ENCODE measurements at regions of chr17 and their contacts with region 1.

Region 1: GRCh38 chr17:47978324-47978723 is 7.4 kb downstream of the CDK5RAP3 start:
- DNase-seq: peak; percentile 67
- H3K4me3 Mint-ChIP-seq: no peak overlapping the region
- H3K27ac Mint-ChIP-seq: no peak overlapping the region
- H3K4me1 Mint-ChIP-seq: peaks cover 16% of the 10 kb centered on the region
- H3K27me3 Mint-ChIP-seq: no peaks in the 10 kb centered on the region

Region 2: DNA sequence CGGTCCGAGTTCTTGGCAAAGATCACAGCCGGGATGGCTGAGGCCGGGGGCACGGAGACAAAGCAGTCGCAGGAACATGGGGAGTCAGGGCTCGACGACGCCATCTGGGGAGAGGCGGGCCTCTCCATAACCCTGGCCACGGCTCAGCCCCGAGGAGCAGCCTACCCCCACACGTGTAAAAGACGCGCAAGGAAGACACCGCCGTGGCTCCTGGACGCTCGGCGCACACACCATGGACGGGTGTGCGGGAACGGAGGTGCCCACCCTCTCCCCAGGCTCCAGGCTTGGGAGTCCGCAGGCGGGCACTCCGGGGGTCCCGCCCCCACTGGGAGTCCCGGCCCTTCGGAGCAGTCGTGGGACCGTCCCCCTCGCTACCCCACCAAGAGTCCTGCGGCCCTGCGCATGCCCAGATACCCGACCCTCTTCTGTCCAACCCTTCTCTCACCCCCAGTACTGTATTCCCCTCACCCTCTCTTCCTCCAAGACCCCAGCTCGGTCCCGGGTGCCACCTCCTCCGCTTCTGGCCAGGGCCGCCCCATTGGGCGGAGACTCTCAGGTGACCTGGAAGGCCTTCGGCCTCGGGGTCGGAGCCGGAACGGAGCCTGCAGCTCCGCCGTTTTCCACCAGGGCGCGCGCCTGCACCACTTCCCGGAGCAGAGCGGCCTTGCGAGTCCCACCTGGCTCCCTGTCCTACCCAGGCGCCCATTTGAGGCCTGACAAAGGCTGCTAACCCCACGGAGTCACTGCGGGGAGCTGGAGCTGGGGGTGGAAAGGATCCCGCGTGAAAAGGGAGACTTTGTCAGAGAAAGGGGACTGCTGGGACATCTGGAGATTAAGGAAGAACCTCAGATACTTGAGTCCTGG is 137.4 kb before region 1 on chr17 and contains the start of gene SCRN2:
- CTCF ChIA-PET with region 1: no interaction called
- POLR2A ChIA-PET with region 1: no interaction called
- DNase-seq: peak; percentile 87
- H3K4me3 Mint-ChIP-seq: peak within 1 kb of the TSS; percentile 98
- H3K27ac Mint-ChIP-seq: peak within 1 kb of the TSS; percentile 91
- H3K4me1 Mint-ChIP-seq: peaks cover 37% of the 10 kb centered on the region
- H3K27me3 Mint-ChIP-seq: peaks cover 17% of the 10 kb centered on the region
- total RNA-seq, gene SCRN2: 26.8 to 33.2 TPM

Region 3: GRCh38 chr17:48011405-48012150 is 33.3 kb after region 1 on chr17:
- CTCF ChIA-PET with region 1: interaction called, 33 read pairs
- POLR2A ChIA-PET with region 1: no interaction called
- DNase-seq: peak; percentile 73
- H3K4me3 Mint-ChIP-seq: peak overlapping the region; percentile 64
- H3K27ac Mint-ChIP-seq: peak overlapping the region; percentile 58
- H3K4me1 Mint-ChIP-seq: peaks cover 24% of the 10 kb centered on the region
- H3K27me3 Mint-ChIP-seq: peaks cover 46% of the 10 kb centered on the region

Region 4: GRCh38 chr17:48194097-48194550 is 215.8 kb after region 1 on chr17:
- CTCF ChIA-PET with region 1: no interaction called
- POLR2A ChIA-PET with region 1: no interaction called
- DNase-seq: peak; percentile 33
- H3K4me3 Mint-ChIP-seq: peak overlapping the region; percentile 20
- H3K27ac Mint-ChIP-seq: peak overlapping the region; percentile 46
- H3K4me1 Mint-ChIP-seq: peaks cover 59% of the 10 kb centered on the region
- H3K27me3 Mint-ChIP-seq: no peaks in the 10 kb centered on the region